ENCODE measurements at regions of chr4 and their contacts with region 1.

Region 1: GRCh38 chr4:120785202-120785601 is 137.3 kb downstream of the PRDM5 start:
- DNase-seq: no peak
- H3K4me3 Mint-ChIP-seq: no peak overlapping the region
- H3K27ac Mint-ChIP-seq: no peak overlapping the region
- H3K4me1 Mint-ChIP-seq: no peaks in the 10 kb centered on the region
- H3K27me3 Mint-ChIP-seq: no peaks in the 10 kb centered on the region
- CTCF ChIP-seq: no peak

Region 2: GRCh38 chr4:120821977-120822376 is 36.8 kb after region 1 on chr4:
- CTCF ChIA-PET with region 1: no interaction called
- POLR2A ChIA-PET with region 1: no interaction called
- intact Hi-C with region 1: loop called (anchors 1 kb)
- DNase-seq: no peak
- H3K4me3 Mint-ChIP-seq: no peak overlapping the region
- H3K27ac Mint-ChIP-seq: no peak overlapping the region
- H3K4me1 Mint-ChIP-seq: no peaks in the 10 kb centered on the region
- H3K27me3 Mint-ChIP-seq: no peaks in the 10 kb centered on the region
- CTCF ChIP-seq: no peak

Measured in MCF 10A (cell line).